ENCODE measurements at regions of chr2 and their contacts with region 1.

Region 1: GRCh38 chr2:211035548-211036185 is 479.3 kb downstream of the CPS1 start:
- DNase-seq: no peak
- ATAC-seq: no peak

Region 2: DNA sequence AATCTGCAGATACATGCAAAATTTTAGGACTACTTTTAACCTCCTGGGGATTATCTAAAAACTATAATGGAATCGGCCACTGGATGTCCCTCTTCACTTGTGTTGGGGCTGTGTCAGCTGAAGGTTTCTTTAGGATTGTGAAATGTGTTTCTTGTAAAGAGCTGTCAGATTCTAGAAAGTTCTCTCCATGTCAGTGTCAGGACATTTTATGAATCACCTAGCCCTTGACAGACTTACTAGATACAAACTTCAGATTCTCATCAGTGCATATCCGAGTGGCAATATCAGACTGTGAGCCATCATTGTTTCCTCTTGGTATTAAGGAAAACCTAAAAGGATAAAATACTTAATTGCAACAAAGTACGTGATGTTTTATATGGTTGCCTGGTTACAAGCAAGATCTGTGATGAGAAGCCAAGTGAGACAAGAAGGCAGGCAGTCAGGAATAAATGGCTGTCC is 372.0 kb before region 1 on chr2:
- intact Hi-C with region 1: loop called (anchors 10 kb)
- DNase-seq: no peak
- ATAC-seq: peak; percentile 28

Region 3: GRCh38 chr2:211306929-211307328 is 271.3 kb after region 1 on chr2:
- intact Hi-C with region 1: no loop called
- DNase-seq: no peak
- ATAC-seq: no peak